ENCODE measurements at regions of chr4 and their contacts with region 1.

Region 1: GRCh38 chr4:11954093-11954492 is 525.4 kb upstream of the HS3ST1 start:
- DNase-seq: no peak
- ATAC-seq: peak in 1 of 2 donors; percentile 68

Region 2: DNA sequence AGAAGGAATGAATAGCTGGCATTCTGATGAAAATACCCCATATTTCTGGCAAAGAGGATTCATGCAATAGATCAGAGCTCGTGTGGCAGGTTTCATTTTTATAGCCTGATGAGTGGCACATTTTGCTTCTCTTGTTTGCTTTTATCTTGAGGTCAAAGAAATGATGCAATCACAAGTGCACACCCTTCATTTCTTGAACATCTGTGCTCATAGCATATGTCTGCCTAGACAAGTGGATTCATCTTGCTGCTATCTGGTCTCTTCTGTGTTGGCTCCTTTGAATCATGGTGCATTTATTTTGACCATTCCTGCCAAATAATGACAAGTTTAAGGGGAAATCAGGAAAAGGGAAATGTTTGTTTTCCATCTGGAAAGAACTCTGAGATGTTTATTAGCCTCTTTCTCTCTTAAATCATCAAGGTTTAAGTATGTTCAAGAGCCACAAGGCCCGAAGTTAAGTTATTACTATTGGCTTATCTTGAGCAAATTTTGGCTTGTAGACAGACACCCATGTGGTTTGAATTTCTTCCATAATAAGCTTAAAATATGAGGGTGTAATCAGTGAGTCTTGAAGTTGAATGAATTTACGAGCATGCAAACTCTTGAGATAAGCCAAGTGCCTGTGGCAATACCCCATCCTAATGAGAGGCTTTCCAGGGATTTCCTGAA is 466.1 kb before region 1 on chr4:
- intact Hi-C with region 1: no loop called
- DNase-seq: no peak
- ATAC-seq: peak in 1 of 2 donors; percentile 66

Region 3: DNA sequence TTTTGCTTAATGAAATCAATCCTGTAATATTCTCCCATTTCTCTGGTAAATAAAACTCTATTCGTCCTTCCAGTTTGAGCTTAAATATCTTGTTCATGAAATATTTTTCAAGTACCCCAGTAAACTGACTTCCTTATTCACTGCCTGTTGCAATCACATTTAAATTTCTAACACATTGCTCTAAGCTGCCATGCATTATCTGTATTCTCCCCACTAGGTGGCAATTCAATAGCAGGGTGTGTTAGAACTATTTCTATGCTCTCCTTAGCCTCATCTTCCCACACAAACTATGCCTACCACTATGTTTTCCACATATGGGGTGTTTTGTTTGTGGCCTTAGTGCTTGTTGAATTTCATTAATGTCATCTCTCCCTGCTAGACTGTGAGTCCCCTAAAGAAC is 148.3 kb before region 1 on chr4:
- intact Hi-C with region 1: loop called in 1 of 2 experiments (anchors 10 kb)
- DNase-seq: no peak
- ATAC-seq: peak; percentile 87 to 90